Common myeloid progenitor, CD34-positive (primary cell): ENCODE measurements at regions of chr10 and their contacts with region 1.

Region 1: GRCh38 chr10:43078987-43079275 is 2.1 kb downstream of the RET start:
- DNase-seq: peak; percentile 40 to 71 (median 66)
- H3K4me3 ChIP-seq: no peak overlapping the region
- H3K27ac ChIP-seq: no peak overlapping the region
- H3K4me1 ChIP-seq: peaks cover 2 to 76% (median 65%) of the 10 kb centered on the region in 4 experiments
- H3K27me3 ChIP-seq: peaks cover 0 to 42% (median 24%) of the 10 kb centered on the region in 5 experiments

Region 2: GRCh38 chr10:42866115-42866995 is 212.6 kb before region 1 on chr10:
- CTCF ChIA-PET with region 1: interaction called, 17 read pairs
- POLR2A ChIA-PET with region 1: no interaction called
- DNase-seq: peak; percentile 57 to 74 (median 72)
- H3K4me3 ChIP-seq: peak overlapping the region in 6 of 7 experiments; percentile 22 to 63 (median 45)
- H3K27ac ChIP-seq: no peak overlapping the region
- H3K4me1 ChIP-seq: peaks cover 3 to 27% (median 20%) of the 10 kb centered on the region in 4 experiments
- H3K27me3 ChIP-seq: peaks cover 0 to 9% (median 0%) of the 10 kb centered on the region in 5 experiments

Region 3: GRCh38 chr10:43064331-43065075 is 14.4 kb before region 1 on chr10:
- CTCF ChIA-PET with region 1: interaction called, 14 read pairs
- POLR2A ChIA-PET with region 1: no interaction called
- DNase-seq: no peak
- H3K4me3 ChIP-seq: no peak overlapping the region
- H3K27ac ChIP-seq: no peak overlapping the region
- H3K4me1 ChIP-seq: peaks cover 0 to 5% (median 0%) of the 10 kb centered on the region in 4 experiments
- H3K27me3 ChIP-seq: no peaks in the 10 kb centered on the region

Region 4: GRCh38 chr10:43093423-43094076 is 14.6 kb after region 1 on chr10:
- CTCF ChIA-PET with region 1: interaction called, 39 read pairs
- POLR2A ChIA-PET with region 1: interaction called, 3 read pairs
- DNase-seq: peak; percentile 52 to 76 (median 74)
- H3K4me3 ChIP-seq: no peak overlapping the region
- H3K27ac ChIP-seq: no peak overlapping the region
- H3K4me1 ChIP-seq: peaks cover 0 to 19% (median 15%) of the 10 kb centered on the region in 4 experiments
- H3K27me3 ChIP-seq: no peaks in the 10 kb centered on the region

Region 5: DNA sequence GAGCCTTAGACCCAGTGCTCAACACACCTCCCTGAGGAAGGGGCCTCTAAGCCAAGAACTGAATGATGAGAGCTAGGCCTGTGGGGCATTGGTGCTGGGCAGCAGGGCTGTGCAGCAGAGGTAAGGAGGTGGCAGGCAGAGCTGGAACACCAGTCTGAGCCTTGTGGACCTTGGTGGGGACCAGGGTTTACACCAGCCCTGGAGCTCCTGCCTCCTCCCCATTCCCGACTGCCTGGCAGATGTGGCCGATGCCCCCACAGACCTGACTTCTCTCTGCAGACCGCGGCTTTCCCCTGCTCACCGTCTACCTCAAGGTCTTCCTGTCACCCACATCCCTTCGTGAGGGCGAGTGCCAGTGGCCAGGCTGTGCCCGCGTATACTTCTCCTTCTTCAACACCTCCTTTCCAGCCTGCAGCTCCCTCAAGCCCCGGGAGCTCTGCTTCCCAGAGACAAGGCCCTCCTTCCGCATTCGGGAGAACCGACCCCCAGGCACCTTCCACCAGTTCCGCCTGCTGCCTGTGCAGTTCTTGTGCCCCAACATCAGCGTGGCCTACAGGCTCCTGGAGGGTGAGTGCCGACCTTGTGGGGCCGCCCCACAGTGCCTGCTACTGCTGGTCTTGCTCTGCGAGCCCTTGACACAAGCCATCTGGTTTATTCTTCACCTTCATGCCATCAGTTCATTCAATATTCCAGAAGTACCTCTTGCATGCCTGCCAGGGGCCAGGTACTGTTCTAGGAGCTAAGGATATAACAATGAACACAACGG is 23.3 kb after region 1 on chr10:
- CTCF ChIA-PET with region 1: interaction called, 11 read pairs
- POLR2A ChIA-PET with region 1: interaction called, 3 read pairs
- DNase-seq: no peak
- H3K4me3 ChIP-seq: no peak overlapping the region
- H3K27ac ChIP-seq: no peak overlapping the region
- H3K4me1 ChIP-seq: peaks cover 0 to 31% (median 18%) of the 10 kb centered on the region in 4 experiments
- H3K27me3 ChIP-seq: peaks cover 0 to 21% (median 10%) of the 10 kb centered on the region in 5 experiments

Region 6: DNA sequence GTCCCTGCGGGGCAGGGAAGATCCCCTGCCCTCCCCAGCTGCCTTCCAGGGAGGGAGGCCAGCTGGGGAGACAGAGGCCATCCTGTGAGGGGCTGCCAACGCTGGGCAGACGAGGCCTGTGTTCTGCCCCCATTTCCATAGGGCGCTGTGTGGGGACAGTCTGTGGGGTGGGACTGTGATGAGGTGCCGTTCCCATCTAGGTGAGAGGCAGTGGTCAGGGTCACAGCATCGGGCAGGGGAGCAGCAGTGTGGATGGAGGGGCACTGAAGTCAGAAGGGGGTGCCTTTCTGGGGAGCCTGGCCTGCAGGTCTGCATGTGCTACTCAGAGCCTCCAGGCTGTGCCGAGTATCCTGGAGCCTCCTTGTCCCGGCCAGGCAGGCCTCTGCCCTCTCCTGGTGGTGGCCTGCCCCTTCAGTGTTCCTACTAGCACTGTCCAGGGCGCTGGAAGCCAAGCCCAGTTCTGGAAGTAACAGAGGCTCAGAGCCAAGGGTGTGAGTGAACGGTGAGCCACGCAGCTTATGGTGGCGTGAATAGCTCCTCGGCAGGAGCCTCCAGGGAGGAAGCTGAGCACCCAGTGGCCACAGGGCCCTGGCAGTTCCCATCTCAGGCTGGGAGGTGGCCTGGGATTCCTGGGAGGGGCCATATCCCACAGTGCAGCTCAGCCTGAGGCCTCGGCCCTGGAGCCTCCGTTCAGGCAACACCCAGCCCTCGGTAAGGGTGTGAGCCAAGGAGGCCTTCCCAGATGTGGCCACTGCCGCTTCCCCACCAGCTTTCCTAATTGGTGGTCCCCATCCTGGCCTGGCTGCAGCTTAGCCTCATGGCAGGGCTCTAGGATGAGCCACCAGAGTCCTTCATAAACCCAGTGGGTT is 36.0 kb after region 1 on chr10:
- CTCF ChIA-PET with region 1: no interaction called
- POLR2A ChIA-PET with region 1: no interaction called
- DNase-seq: no peak
- H3K4me3 ChIP-seq: no peak overlapping the region
- H3K27ac ChIP-seq: no peak overlapping the region
- H3K4me1 ChIP-seq: peaks cover 0 to 36% (median 10%) of the 10 kb centered on the region in 4 experiments
- H3K27me3 ChIP-seq: no peaks in the 10 kb centered on the region

Region 7: DNA sequence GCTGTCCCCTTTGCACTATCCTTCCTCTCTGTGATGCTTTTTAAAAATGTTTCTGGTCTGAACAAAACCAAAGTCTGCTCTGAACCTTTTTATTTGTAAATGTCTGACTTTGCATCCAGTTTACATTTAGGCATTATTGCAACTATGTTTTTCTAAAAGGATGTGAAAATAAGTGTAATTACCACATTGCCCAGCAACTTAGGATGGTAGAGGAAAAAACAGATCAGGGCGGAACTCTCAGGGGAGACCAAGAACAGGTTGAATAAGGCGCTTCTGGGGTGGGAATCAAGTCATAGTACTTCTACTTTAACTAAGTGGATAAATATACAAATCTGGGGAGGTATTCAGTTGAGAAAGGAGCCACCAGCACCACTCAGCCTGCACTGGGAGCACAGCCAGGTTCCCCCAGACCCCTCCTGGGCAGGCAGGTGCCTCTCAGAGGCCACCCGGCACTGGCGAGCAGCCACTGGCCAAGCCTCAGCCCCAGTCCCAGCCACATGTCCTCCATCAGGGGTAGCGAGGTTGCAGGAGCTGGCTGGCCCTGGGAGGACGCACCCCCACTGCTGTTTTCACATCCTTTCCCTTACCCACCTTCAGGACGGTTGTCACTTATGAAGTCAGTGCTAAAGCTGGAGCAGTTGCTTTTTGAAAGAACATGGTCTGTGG is 48.0 kb after region 1 on chr10:
- CTCF ChIA-PET with region 1: no interaction called
- POLR2A ChIA-PET with region 1: no interaction called
- DNase-seq: no peak
- H3K4me3 ChIP-seq: no peak overlapping the region
- H3K27ac ChIP-seq: no peak overlapping the region
- H3K4me1 ChIP-seq: peaks cover 8 to 82% (median 59%) of the 10 kb centered on the region in 4 experiments
- H3K27me3 ChIP-seq: no peaks in the 10 kb centered on the region

Region 8: GRCh38 chr10:43265799-43266721 is 187.1 kb after region 1 on chr10:
- CTCF ChIA-PET with region 1: no interaction called
- POLR2A ChIA-PET with region 1: no interaction called
- DNase-seq: peak in 2 of 3 donors; percentile 62 to 66
- H3K4me3 ChIP-seq: peak overlapping the region in 6 of 7 experiments; percentile 29 to 71 (median 54)
- H3K27ac ChIP-seq: no peak overlapping the region
- H3K4me1 ChIP-seq: peaks cover 0 to 12% (median 7%) of the 10 kb centered on the region in 4 experiments
- H3K27me3 ChIP-seq: peaks cover 11 to 68% (median 24%) of the 10 kb centered on the region in 5 experiments